A673 (cell line): ENCODE measurements at regions of chr4 and their contacts with region 1.

Region 1: DNA sequence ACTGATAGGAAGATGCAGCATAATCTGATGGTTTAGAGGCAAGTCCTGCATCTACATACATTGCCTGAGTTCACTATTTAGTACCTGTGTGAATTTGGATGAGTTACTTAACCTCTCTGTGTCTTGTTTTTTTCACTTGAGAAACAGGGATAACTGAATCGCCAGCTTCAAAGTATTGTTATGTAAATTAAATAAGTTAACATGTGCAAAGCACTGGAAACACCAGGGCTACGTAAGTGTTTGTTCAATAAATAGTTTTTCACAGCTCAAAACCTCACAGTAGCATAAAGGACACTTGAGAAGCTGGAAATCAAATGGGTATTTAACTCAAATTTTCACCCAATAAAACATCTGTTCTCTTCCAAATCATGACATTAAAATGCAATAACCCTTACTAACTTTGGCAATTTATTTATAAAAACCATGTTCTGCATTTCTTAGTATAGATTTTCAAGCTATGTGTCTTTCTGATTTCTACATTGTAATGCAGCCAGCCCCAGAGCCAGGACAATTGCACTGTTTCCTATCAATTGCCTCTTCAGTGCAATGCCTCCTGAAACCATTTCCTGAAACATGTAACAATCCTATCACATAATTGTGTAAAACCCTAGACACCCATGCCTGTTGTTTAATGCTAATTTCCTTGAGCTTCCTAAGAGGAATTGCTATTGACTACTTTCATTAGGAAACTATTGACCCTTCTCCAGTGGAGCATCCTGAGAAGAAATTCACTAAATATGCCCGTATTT is 177.1 kb downstream of the UNC5C start:
- DNase-seq: peak; percentile 21
- H3K4me3 ChIP-seq: no peak overlapping the region
- H3K27ac ChIP-seq: no peak overlapping the region
- H3K4me1 ChIP-seq: no peaks in the 10 kb centered on the region
- H3K27me3 ChIP-seq: no peaks in the 10 kb centered on the region
- CTCF ChIP-seq: no peak

Region 2: DNA sequence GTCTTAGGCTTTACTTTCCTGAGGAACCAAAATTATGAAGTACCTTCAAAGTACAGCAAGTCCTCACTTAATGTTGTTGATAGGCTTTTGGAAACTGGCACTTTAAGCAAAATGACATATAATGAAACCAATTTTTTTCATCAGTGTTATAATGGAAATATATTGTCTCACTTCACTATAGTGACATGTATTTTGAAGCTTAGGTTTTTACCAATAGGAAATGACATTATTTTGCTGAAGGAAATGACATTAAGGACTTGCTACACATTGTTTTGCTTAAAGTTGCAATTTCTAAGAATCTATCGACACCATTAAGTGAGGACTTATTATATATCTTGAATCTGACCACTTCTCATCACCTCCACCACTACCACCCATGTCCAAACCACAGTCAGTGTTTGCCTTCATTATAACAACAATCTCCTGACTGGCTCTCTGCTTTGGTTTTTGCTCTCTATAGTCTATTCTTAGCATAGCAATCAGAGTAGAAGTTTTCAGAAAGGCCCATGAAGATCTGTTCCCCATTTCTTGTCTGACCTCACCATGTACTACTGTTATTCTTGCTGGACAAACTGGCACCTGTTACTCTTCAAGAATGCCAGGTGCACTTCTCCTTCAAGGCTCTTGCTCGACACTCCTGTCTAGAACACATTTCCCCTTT is 302.7 kb before region 1 on chr4:
- CTCF ChIA-PET with region 1: no interaction called
- POLR2A ChIA-PET with region 1: no interaction called
- intact Hi-C with region 1: no loop called
- DNase-seq: no peak
- H3K4me3 ChIP-seq: no peak overlapping the region
- H3K27ac ChIP-seq: no peak overlapping the region
- H3K4me1 ChIP-seq: peaks cover 12% of the 10 kb centered on the region
- H3K27me3 ChIP-seq: no peaks in the 10 kb centered on the region
- CTCF ChIP-seq: no peak

Region 3: DNA sequence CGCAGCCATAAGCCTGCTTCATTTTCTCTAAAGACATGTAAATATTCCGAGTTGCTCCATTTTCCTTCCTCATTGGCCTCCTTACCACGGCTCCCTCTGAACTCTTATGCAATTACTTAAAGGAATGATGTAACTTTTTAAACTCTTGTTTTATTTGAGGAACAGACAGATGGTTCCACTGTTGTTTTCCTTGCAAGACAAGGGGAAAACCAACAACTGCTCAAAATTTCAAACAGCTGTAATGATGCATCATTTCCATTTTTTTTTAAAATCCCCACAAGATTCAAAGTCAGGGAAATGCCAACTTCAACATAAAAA is 155.4 kb before region 1 on chr4:
- CTCF ChIA-PET with region 1: no interaction called
- POLR2A ChIA-PET with region 1: no interaction called
- intact Hi-C with region 1: no loop called
- DNase-seq: no peak
- H3K4me3 ChIP-seq: no peak overlapping the region
- H3K27ac ChIP-seq: peak overlapping the region; percentile 34
- H3K4me1 ChIP-seq: peaks cover 18% of the 10 kb centered on the region
- H3K27me3 ChIP-seq: no peaks in the 10 kb centered on the region
- CTCF ChIP-seq: no peak

Region 4: DNA sequence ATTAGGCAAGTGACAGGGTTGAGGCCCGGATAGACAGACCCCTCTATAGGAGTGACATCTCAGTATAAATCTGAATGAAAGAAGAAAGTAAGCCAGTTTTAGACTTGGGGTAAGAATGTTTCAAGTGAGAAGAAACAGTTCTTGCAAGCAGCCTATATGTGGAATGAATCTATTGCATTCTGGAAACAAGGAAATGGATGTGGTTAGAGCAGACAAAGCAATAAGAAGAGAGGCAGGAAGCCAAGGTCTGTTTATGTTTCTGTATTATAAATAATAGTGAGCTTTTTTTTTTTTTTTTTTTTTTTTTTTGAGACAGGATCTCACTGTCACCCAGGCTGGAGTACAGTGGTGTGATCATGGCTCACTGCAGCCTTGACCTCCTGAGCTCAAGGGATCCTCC is 78.6 kb before region 1 on chr4:
- CTCF ChIA-PET with region 1: no interaction called
- POLR2A ChIA-PET with region 1: no interaction called
- intact Hi-C with region 1: loop called (anchors 5 kb)
- DNase-seq: peak; percentile 34
- H3K4me3 ChIP-seq: no peak overlapping the region
- H3K27ac ChIP-seq: no peak overlapping the region
- H3K4me1 ChIP-seq: peaks cover 28% of the 10 kb centered on the region
- H3K27me3 ChIP-seq: no peaks in the 10 kb centered on the region
- CTCF ChIP-seq: no peak